ENCODE measurements at regions of chr2 and their contacts with region 1.

Region 1: GRCh38 chr2:175326801-175327200 is 145.3 kb upstream of the ATP5MC3 start:
- DNase-seq: no peak
- ATAC-seq: no peak
- H3K4me3 ChIP-seq: no peak overlapping the region
- H3K27ac ChIP-seq: no peak overlapping the region
- H3K4me1 ChIP-seq: no peaks in the 10 kb centered on the region
- H3K27me3 ChIP-seq: no peaks in the 10 kb centered on the region
- CTCF ChIP-seq: no peak
- POLR2A ChIP-seq: no peak
- RAD21 ChIP-seq: no peak

Region 2: DNA sequence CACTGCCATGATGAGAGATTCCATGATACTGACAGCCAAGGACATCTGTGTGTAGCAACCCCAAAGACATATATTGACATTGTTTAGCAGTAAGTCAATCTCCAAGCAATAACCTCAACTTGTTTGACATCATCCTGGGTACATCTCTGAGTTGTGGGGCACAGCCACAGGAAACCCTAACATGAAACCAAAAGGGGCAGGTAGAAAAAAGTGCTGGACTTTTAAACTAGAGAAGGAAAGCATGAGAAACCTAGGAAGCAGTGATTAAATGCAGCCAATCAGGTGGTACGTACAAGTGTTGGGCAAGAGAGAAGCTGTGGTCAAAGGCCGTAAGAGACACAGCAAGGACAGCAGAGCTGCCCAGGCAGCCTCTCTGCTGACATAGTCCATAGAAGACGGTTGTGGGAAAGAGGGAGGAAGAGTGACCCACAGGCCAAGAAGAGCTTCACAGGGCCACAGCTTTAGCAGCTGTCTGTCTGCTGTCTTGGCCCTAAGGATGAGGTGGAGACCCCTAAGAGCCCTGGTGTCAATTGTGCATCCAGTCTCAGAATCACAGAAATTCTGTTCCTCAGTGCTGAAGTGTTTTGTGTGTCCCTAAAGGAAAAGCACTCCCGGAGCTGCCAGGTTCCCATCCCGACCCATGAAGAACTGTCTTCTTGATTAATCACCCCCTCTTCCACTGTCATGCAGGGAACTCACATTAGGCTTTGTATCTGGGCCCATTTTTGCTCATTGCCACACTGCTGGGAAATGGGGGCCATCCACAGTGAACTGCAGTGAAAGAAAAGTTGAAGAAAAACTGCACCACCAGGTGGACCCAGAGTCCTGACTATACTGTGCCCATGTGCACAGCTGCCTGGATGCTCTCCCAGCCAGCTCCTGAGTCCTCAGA is 296.2 kb before region 1 on chr2:
- CTCF ChIA-PET with region 1: no interaction called
- POLR2A ChIA-PET with region 1: no interaction called
- dilution Hi-C with region 1: no loop called
- in situ Hi-C with region 1: no loop called
- intact Hi-C with region 1: loop called (anchors 5 kb)
- DNase-seq: peak; percentile 58
- ATAC-seq: peak; percentile 96
- H3K4me3 ChIP-seq: no peak overlapping the region
- H3K27ac ChIP-seq: no peak overlapping the region
- H3K4me1 ChIP-seq: peaks cover 2% of the 10 kb centered on the region; the same call in 1 of the 2 replicates
- H3K27me3 ChIP-seq: no peaks in the 10 kb centered on the region
- CTCF ChIP-seq: peak; percentile 51
- POLR2A ChIP-seq: no peak
- RAD21 ChIP-seq: peak; percentile 71

Region 3: DNA sequence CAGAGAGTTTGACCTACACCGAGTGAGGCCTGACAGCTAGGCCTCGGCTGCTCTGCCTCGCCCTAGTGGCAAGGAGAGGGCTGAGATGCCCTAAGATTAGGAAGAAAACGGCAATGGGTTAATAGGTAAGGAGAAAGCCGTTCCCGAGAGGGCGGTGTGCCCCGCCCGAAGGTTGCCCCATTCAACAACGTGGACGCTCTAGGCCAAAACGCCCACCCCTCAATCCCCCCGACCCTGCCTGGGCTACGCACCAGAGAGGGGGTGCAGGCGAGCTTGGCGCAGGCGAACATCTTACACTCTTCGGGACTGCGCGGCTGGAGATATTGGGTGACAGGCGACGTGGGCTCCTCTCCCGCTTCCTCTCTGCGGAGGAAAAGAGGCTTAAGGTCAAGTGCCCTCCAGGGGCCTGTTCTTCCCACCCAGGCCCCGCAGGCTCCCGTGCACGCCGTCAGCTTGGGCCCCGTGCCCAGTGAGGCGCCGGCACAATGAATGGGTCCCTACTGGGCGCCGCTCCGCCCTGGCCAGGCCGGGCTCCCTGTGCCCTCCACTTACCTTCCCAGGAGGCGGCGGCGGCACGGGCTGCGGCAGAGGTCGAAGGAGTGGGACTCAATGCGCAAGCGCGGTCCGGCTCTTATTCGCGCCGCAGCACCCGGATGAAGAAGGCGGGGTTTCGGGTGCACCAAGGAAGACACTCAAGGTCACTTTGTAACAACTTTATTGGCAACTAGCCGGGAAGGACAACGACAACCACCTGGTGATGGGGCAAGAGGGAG is 145.5 kb before region 1 on chr2 and contains the start of gene ATP5MC3:
- CTCF ChIA-PET with region 1: no interaction called
- POLR2A ChIA-PET with region 1: no interaction called
- dilution Hi-C with region 1: no loop called
- in situ Hi-C with region 1: no loop called
- intact Hi-C with region 1: no loop called
- DNase-seq: peak; percentile 91
- ATAC-seq: peak; percentile 92
- H3K4me3 ChIP-seq: peak within 1 kb of the TSS; percentile 89
- H3K27ac ChIP-seq: peak within 1 kb of the TSS; percentile 97
- H3K4me1 ChIP-seq: no peaks in the 10 kb centered on the region
- H3K27me3 ChIP-seq: no peaks in the 10 kb centered on the region
- CTCF ChIP-seq: 0 out of 2 replicates have a peak, but pooled peaks have one; percentile 15
- POLR2A ChIP-seq: peak; percentile 58; the same call in 1 of the 2 replicates
- RAD21 ChIP-seq: no peak
- total RNA-seq, gene ATP5MC3: 167 and 226 TPM in 2 replicates

Region 4: GRCh38 chr2:175203621-175204496 is 122.9 kb before region 1 on chr2:
- CTCF ChIA-PET with region 1: interaction called, 5 read pairs
- POLR2A ChIA-PET with region 1: no interaction called
- dilution Hi-C with region 1: no loop called
- in situ Hi-C with region 1: no loop called
- intact Hi-C with region 1: loop called (anchors 1 kb)
- DNase-seq: peak; percentile 47
- ATAC-seq: peak; percentile 99
- H3K4me3 ChIP-seq: no peak overlapping the region
- H3K27ac ChIP-seq: no peak overlapping the region
- H3K4me1 ChIP-seq: no peaks in the 10 kb centered on the region
- H3K27me3 ChIP-seq: peaks cover 4% of the 10 kb centered on the region
- CTCF ChIP-seq: peak; percentile 65
- POLR2A ChIP-seq: no peak
- RAD21 ChIP-seq: peak; percentile 59

Measured in IMR-90 (cell line).